OCI-LY7 (cell line): ENCODE measurements at regions of chr1 and their contacts with region 1.

Region 1: GRCh38 chr1:97849345-97850340 is 71.2 kb downstream of the DPYD start:
- DNase-seq: no peak
- H3K4me3 ChIP-seq: no peak overlapping the region
- H3K27ac ChIP-seq: no peak overlapping the region
- H3K4me1 ChIP-seq: peaks cover 11% of the 10 kb centered on the region
- CTCF ChIP-seq: no peak

Region 2: GRCh38 chr1:97254731-97255463 is 594.7 kb before region 1 on chr1:
- CTCF ChIA-PET with region 1: no interaction called
- POLR2A ChIA-PET with region 1: no interaction called
- intact Hi-C with region 1: no loop called
- DNase-seq: no peak
- H3K4me3 ChIP-seq: no peak overlapping the region
- H3K27ac ChIP-seq: no peak overlapping the region
- H3K4me1 ChIP-seq: no peaks in the 10 kb centered on the region
- CTCF ChIP-seq: no peak

Region 3: DNA sequence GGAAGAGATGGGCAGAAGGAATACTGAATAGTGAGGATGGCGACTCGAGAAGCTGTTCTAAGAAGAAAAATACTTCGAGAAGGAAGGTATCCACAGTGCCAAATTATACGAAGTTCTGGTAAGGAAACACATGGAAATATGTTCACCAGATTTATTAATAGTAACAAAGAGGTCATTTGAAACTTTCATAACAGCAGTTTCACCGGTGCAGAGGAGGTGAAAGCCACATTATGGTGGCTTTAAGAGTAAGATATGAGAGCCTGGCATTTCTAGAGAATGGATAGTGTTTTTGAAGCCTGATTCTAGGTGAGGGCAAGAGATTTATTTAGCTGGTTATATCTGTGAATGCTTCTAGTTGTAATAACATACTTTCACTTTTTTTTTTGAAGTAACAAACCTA is 15.0 kb after region 1 on chr1:
- CTCF ChIA-PET with region 1: no interaction called
- POLR2A ChIA-PET with region 1: interaction called, 12 read pairs
- intact Hi-C with region 1: no loop called
- DNase-seq: no peak
- H3K4me3 ChIP-seq: no peak overlapping the region
- H3K27ac ChIP-seq: no peak overlapping the region
- H3K4me1 ChIP-seq: no peaks in the 10 kb centered on the region
- CTCF ChIP-seq: no peak

Region 4: GRCh38 chr1:97920832-97921571 is 71.4 kb after region 1 on chr1 and contains the start of gene DPYD:
- CTCF ChIA-PET with region 1: interaction called, 3 read pairs
- POLR2A ChIA-PET with region 1: interaction called, 15 read pairs
- intact Hi-C with region 1: loop called (anchors 1 kb)
- DNase-seq: peak; percentile 90
- H3K4me3 ChIP-seq: peak within 1 kb of the TSS; percentile 87
- H3K27ac ChIP-seq: peak within 1 kb of the TSS; percentile 78
- H3K4me1 ChIP-seq: peaks cover 14% of the 10 kb centered on the region
- CTCF ChIP-seq: no peak
- total RNA-seq, gene DPYD: 3.9 and 5.5 TPM in 2 replicates